OCI-LY7 (cell line): ENCODE measurements at regions of chr1 and their contacts with region 1.

Region 1: DNA sequence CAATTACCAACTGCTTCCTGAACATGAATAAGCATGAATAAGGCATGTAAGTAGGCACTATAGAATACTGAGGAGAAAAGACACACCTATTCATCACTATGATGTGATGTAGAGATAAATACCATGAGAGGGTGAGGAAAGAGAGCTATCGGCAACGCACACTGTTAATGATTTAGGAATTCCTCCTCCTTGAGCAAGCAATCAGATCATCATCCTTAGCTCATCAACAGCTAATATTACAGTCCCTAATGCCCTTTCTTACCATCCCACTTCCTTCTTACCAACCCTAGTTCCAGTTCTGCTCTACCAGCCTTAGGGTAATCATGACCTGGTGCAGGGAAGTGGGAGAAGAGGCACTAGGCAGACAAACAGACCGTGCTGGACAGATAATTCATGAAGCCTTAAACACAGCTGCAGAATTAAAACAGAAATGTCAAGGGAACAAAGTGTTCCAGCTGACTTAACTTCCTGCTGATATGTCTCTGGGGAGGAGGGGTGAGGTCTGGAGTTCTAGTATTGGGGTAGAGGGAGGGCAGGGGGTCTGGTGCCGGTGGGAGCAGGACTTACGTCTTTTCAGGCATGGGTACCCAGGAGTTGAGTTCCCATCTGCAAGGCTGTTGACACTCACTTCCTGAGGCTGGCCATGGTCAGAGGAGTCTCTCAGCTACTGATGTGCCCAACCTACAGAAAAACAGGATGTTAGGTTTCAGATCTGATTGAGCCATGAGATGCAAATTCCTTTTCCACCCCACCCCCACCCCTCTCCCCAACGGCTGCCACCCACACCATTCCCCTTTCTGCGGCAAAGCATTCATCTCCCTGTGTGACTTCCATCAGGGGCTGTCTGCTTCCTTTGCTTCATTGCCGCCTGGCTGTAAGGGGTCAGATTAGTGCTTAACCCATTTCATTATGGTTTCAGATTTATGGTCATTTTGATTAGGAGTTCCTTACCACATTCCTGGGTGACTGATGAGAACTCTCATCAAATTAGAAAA is 12.6 kb upstream of the RCSD1 start:
- DNase-seq: peak; percentile 98
- H3K4me3 ChIP-seq: peak overlapping the region; percentile 68
- H3K27ac ChIP-seq: peak overlapping the region; percentile 96
- H3K4me1 ChIP-seq: peaks cover 83% of the 10 kb centered on the region
- CTCF ChIP-seq: no peak

Region 2: DNA sequence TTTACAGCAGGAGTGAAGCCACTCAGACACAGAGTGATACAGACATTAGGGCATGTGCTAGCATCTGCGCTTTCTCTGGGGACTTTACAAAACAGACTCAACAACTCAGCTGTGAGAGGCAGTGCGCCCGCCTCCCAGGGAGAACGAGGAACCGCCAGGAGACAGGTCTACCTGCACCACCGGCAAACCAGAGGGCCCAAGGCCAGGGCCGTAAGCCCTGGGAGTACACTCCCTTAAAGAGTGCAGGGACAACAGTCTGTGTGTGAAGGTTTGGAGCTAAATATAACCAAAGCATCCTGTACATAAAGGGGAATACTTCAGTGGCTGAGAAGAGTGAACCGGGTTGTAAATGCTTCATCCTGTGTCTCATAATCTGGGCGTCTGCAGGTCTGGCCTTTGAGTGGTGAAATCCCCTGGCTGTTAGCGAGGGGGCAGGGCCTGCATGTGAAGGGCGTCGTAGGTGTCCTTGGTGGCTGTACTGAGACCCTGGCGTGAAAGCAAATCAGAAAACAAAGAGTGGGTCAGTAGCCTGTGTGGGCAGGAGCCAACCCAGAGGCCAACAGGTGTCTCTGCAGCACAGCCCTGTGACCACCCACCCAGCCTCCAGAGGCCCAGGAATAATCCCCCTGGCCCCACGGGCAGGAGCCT is 186.1 kb before region 1 on chr1:
- CTCF ChIA-PET with region 1: interaction called, 18 read pairs
- POLR2A ChIA-PET with region 1: no interaction called
- intact Hi-C with region 1: no loop called
- DNase-seq: peak; percentile 48
- H3K4me3 ChIP-seq: peak overlapping the region; percentile 1
- H3K27ac ChIP-seq: peak overlapping the region; percentile 38
- H3K4me1 ChIP-seq: peaks cover 41% of the 10 kb centered on the region
- CTCF ChIP-seq: no peak